Left cardiac atrium (tissue), 4 donors: ENCODE measurements at regions of chr1 and their contacts with region 1.

Region 1: GRCh38 chr1:40849801-40850592 is 12.2 kb downstream of the CITED4 start:
- DNase-seq: peak; percentile 74
- ATAC-seq: peak; percentile 75 to 88

Region 2: GRCh38 chr1:40774266-40774998 is 75.6 kb before region 1 on chr1:
- intact Hi-C with region 1: loop called (anchors 5 to 10 kb)
- DNase-seq: peak; percentile 61
- ATAC-seq: peak; percentile 56 to 61

Region 3: DNA sequence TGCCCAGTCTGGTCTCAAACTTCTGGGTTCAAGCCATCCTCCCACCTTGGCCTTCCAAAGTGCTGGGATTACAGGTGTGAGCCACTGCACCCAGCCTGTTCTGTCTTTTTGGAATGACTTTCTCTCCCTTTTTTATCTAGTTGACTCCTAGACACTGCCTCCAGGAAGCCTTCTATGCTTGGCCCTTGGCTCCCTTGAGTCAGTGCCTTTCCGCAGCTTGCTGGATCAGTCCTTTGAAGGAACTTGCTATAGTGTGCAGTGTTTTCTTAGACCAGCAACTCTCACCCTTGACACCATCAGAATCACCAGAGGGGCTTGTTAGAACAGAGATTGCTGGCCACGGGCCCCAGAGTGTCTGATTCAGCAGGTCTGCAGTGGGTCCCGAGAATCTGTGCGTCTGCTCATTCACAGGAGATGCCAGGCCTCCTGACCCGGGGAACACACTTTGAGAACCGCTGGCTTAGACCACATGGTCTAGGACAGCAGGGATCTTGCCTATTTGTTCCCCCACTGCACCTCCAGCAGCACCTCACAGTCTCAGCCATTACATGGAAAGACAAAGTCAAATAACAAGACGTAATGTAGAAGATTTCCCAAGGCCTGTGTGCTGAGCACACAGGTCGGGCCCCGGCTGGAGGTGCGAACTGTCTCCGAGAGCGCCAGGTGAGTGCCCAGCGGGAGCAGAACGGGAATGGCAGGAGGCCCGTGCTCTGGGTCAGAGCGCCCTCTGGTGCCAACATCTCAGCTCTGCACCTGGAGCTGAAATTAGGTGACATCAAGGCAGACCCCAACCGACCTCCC is 102.1 kb after region 1 on chr1:
- intact Hi-C with region 1: loop called (anchors 2 kb)
- DNase-seq: peak; percentile 73
- ATAC-seq: peak; percentile 85 to 87